ENCODE measurements at regions of chr22 and their contacts with region 1.

Region 1: DNA sequence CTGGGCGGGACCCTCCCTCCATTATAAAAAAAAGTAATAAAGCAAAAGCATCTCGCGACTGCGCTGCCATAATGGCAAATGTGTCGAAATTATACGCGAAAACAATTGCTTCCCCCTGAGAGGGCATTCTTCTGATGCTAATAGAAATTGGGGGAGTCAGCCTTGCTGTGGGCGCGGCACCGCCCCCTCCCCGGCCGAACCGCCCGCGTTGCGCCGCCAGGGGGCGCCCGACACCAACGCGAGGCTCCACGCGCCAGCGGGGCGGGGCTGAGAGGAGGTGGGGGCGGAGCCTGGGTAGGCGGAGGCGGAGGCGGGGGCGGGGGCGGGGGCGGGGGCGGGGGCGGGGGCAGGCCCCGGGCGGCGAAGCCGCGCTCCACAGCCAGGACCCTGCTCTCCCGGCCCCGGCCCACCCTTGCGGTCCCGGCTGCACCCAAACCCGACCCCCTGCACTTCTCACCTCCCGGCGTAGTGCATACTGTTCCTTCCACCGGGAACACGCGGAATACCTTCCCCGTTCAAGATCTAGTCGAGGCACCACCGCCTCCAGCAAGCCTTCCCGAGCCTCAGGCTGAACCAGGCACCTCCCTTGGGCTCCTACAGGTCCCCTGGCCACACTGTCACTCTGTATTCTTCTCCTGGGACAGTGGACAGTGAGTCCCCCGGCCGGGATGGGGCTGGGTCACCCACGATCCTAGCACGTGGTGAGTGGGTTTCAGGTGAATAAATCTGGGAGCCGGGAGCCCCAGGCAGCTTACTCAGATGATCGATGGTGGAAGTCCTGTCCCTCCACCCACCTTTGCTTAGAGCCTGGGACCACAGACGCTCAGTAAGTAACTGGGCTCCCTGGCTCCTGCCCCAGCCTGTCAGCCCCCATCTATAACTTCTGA is 15.5 kb upstream of the UPK3A start:
- DNase-seq: peak; percentile 71 to 81
- H3K4me3 ChIP-seq: peak overlapping the region; percentile 43 to 74 (median 59)
- H3K27ac ChIP-seq: peak overlapping the region; percentile 30 to 68
- H3K4me1 ChIP-seq: peaks cover 0 to 7% of the 10 kb centered on the region in 2 donors
- H3K27me3 ChIP-seq: no peaks in the 10 kb centered on the region
- CTCF ChIP-seq: peak; percentile 67 to 91 (median 81)
- POLR2A ChIP-seq: no peak

Region 2: DNA sequence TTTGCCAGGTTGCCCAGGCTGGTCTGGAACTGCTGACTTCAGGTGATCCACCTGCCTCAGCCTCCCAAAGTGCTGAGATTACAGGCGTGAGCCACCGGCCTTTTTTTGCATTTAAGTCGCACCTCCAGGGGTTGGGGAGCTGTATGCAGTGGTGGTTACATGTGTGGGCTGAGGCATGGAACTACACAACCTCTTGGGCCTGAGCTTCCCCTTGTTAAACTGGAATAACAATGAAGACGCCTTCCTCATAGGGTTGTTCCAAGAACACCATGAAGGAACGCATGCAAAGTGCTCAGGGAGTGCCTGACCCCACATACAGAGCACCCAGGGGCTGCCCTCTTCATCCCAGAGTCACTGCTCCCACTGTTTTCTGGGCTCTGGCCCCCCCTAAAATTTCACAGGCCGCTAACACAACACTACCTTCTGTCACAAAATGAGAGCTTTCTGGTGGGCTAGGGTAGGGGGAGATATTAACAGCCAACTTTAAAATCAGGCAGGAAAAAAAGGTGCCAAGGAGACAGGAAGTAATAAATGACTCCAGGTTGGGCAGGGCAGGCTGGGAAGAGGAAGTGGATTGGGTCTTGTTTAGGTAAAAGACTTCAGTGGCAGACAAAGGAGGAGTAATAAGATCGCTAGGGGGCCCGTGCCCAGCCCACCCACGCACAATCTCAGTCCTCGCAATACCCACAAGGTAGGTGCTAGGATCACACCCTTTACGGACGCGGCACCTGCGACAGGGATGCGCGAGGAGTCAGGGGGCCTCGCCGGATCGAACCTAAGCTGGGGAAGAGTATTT is 39.4 kb after region 1 on chr22:
- intact Hi-C with region 1: loop called (anchors 1 kb)
- DNase-seq: peak in 1 of 2 donors; percentile 35
- H3K4me3 ChIP-seq: peak overlapping the region; percentile 98 to 100 (median 99)
- H3K27ac ChIP-seq: peak overlapping the region; percentile 84 to 90
- H3K4me1 ChIP-seq: peaks cover 4 to 8% of the 10 kb centered on the region in 2 donors
- H3K27me3 ChIP-seq: no peaks in the 10 kb centered on the region
- CTCF ChIP-seq: no peak
- POLR2A ChIP-seq: no peak

Region 3: DNA sequence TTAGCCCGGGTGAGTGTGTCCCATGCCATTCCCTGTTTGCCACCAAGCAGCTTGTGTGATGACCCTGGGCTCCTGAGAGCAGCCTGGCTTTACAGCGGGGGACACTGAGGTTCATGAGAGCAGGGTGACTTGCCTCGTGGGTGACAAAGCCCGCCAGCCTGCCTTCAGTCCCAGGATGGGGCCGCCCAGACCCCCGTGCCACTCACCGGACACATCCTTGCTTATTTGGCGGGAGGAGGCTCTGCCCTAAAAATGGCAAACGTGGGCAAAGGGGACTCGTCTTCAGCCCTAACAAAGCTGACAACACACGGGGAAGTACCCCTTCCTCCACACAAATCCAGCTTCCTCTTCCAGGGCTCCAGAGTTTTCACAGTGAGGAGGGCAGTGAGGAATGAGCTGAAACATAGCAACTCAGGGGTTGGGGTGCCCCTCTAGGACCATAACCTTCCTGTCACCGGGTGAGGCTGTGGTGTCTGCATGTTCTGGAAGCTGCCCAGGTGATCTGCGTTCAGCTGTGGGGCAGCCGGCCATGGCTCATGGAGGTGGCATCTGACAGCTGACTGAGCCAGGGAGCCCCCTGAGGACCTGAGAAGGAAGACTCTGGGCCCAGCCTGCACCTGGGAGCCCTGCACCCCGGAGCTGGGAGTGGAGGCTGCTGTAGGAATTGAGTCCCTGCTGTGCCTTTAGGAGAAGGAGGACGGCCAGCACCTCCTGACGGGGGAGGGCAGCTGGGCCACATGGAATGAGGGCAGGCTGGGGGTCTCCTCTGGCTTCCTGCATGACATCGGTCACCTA is 161.0 kb after region 1 on chr22:
- intact Hi-C with region 1: loop called (anchors 5 kb)
- DNase-seq: no peak
- H3K4me3 ChIP-seq: no peak overlapping the region
- H3K27ac ChIP-seq: no peak overlapping the region
- H3K4me1 ChIP-seq: no peaks in the 10 kb centered on the region
- H3K27me3 ChIP-seq: no peaks in the 10 kb centered on the region
- CTCF ChIP-seq: no peak
- POLR2A ChIP-seq: no peak